CD8-positive, alpha-beta T cell (primary cell): ENCODE measurements at regions of chr1 and their contacts with region 1.

Region 1: GRCh38 chr1:193567937-193568336 is 381.5 kb upstream of the B3GALT2 start:
- DNase-seq: no peak
- ATAC-seq: no peak
- H3K4me3 ChIP-seq: no peak overlapping the region
- H3K4me3 Mint-ChIP-seq: no peak overlapping the region
- H3K27ac ChIP-seq: no peak overlapping the region
- H3K27ac Mint-ChIP-seq: no peak overlapping the region
- H3K4me1 ChIP-seq: no peaks in the 10 kb centered on the region
- H3K4me1 Mint-ChIP-seq: peaks cover 25% of the 10 kb centered on the region
- H3K27me3 ChIP-seq: no peaks in the 10 kb centered on the region
- H3K27me3 Mint-ChIP-seq: no peaks in the 10 kb centered on the region
- CTCF ChIP-seq: no peak

Region 2: GRCh38 chr1:193542690-193543089 is 25.2 kb before region 1 on chr1:
- CTCF ChIA-PET with region 1: no interaction called
- POLR2A ChIA-PET with region 1: no interaction called
- intact Hi-C with region 1: loop called in 1 of 2 experiments (anchors 2 kb)
- DNase-seq: no peak
- ATAC-seq: no peak
- H3K4me3 ChIP-seq: no peak overlapping the region
- H3K4me3 Mint-ChIP-seq: peak overlapping the region; percentile 7
- H3K27ac ChIP-seq: no peak overlapping the region
- H3K27ac Mint-ChIP-seq: peak overlapping the region; percentile 4
- H3K4me1 ChIP-seq: no peaks in the 10 kb centered on the region
- H3K4me1 Mint-ChIP-seq: peaks cover 34% of the 10 kb centered on the region
- H3K27me3 ChIP-seq: no peaks in the 10 kb centered on the region
- H3K27me3 Mint-ChIP-seq: no peaks in the 10 kb centered on the region
- CTCF ChIP-seq: no peak